ENCODE measurements at regions of chr10 and their contacts with region 1.

Region 1: DNA sequence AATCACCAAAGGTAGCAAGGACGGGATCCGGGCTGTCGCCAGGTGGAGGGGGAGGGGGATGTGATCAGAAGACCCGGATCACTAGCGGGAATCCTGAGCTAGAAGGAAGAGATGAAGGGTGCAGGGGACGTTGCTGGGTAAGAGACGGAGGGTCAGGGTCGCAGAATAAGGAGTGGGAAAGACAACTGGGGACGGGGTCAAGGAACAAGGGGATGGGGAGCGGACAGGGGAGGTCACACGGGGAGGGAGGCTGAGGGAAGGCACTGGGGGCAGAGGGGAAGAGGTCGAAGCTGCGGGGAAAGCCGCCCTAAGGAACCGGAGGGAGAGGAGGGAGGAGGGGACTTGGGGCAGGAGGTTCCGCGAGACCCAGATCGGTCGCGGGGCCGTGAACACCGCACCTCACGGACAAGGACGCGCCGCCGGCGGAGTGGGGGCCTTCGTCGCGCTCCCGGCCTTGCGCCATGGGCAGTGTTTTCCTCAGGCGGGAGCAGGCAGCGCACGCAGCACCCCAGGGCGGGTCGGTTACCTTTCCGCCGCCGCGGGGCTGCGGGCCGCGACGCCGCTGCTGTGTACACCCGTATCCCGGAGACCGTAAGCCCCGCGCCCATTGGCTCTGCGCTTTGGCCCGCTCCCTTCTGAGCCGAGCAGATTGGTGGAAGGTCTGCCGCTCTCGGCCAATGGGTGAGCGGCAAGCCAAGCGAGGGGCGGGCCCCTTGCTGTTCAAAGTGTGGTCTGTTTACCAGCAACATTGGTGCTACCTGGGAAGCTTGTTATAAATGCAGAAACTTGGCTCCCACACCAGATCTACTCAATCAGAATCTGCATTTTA is at the start of gene CFAP43:
- DNase-seq: peak; percentile 99 to 100 (median 99)
- ATAC-seq: peak; percentile 100
- H3K4me3 ChIP-seq: peak within 1 kb of the TSS; percentile 74
- H3K4me3 Mint-ChIP-seq: peak within 1 kb of the TSS; percentile 84 to 95 (median 91)
- H3K27ac ChIP-seq: peak within 1 kb of the TSS; percentile 44
- H3K27ac Mint-ChIP-seq: peak within 1 kb of the TSS; percentile 63 to 95 (median 86)
- H3K4me1 ChIP-seq: peaks cover 0 to 6% of the 10 kb centered on the region in 2 donors
- H3K4me1 Mint-ChIP-seq: peaks cover 6 to 18% (median 13%) of the 10 kb centered on the region in 7 donors
- H3K27me3 ChIP-seq: peaks cover 0 to 7% of the 10 kb centered on the region in 2 donors
- H3K27me3 Mint-ChIP-seq: peaks cover 10 to 58% (median 19%) of the 10 kb centered on the region in 5 donors
- total RNA-seq, gene CFAP43: 0.17 TPM in 1 of 5 experiments, not detected in the others

Region 2: DNA sequence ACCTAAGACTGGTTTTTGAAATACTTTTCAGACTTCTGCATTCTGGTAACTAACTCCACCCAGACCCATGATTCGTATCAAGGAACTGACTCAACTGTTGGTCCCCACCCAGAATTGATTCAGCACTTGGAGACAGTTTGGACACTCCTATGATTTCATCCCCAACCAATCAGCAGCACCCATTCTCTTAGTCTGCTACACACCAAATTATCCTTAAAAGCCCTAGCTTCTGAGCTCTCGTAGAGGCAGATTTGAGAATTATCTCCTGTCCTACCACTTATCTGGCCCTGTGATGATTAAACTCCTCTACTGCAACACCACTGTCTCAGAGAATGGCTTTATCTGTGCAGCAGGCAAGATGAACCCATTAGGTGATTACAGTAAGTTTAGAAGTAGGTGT is 15.0 kb after region 1 on chr10:
- CTCF ChIA-PET with region 1: no interaction called
- POLR2A ChIA-PET with region 1: interaction called, 3 read pairs
- intact Hi-C with region 1: loop called in 1 of 2 experiments (anchors 2 kb)
- DNase-seq: no peak
- ATAC-seq: peak; percentile 93
- H3K4me3 ChIP-seq: no peak overlapping the region
- H3K4me3 Mint-ChIP-seq: peak overlapping the region in 1 of 10 donors; percentile 26
- H3K27ac ChIP-seq: no peak overlapping the region
- H3K27ac Mint-ChIP-seq: peak overlapping the region in 1 of 9 donors; percentile 69
- H3K4me1 ChIP-seq: no peaks in the 10 kb centered on the region
- H3K4me1 Mint-ChIP-seq: peaks cover 0 to 19% (median 0%) of the 10 kb centered on the region in 7 donors
- H3K27me3 ChIP-seq: no peaks in the 10 kb centered on the region
- H3K27me3 Mint-ChIP-seq: peaks cover 0 to 28% (median 5%) of the 10 kb centered on the region in 5 donors

Region 3: DNA sequence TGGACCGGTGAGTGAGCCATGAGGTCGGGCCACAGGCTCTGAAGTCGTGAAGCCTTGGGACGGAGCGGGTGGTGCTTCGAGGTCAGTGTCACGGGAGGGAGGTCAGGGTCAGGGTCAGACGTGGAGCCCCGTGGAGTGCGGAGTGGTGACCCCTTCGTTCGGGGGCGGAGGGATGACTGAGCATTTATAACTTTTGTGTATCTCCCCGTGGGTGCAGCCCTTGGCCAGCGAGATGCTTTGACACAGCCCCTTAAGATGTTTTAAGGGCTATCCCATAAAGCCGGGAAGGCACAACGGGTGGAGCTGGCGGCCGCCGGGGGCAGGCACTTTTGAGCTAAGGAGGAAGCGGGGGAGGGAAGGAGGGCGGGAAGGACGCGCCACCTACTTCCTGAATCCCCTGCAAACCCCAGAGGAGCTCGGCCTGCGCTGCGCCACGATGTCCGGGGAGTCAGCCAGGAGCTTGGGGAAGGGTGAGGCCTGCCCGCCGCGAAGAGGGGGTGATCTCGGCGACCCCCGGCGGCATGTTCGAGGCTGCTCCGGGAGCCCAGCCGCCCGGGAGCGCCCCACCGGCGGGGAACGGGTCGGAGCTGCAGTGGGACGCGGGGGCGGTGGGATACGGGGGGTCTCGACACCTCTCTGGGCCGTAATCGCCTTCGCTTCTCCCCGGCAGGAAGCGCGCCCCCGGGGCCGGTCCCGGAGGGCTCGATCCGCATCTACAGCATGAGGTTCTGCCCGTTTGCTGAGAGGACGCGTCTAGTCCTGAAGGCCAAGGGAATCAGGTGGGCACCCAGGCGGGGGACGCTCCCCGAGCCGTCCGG is 22.7 kb after region 1 on chr10 and contains the start of gene GSTO1:
- CTCF ChIA-PET with region 1: no interaction called
- POLR2A ChIA-PET with region 1: interaction called, 6 read pairs
- intact Hi-C with region 1: loop called (anchors 1 kb)
- DNase-seq: peak; percentile 28 to 59 (median 35)
- ATAC-seq: peak; percentile 71
- H3K4me3 ChIP-seq: peak within 1 kb of the TSS; percentile 83
- H3K4me3 Mint-ChIP-seq: peak within 1 kb of the TSS; percentile 84 to 100 (median 96)
- H3K27ac ChIP-seq: peak within 1 kb of the TSS; percentile 89
- H3K27ac Mint-ChIP-seq: peak within 1 kb of the TSS; percentile 85 to 97 (median 96)
- H3K4me1 ChIP-seq: peaks cover 9 to 23% of the 10 kb centered on the region in 2 donors
- H3K4me1 Mint-ChIP-seq: peaks cover 33 to 56% (median 48%) of the 10 kb centered on the region in 7 donors
- H3K27me3 ChIP-seq: no peaks in the 10 kb centered on the region
- H3K27me3 Mint-ChIP-seq: peaks cover 0 to 19% (median 0%) of the 10 kb centered on the region in 5 donors
- total RNA-seq, gene GSTO1: 28.1 to 129 (median 49.1) TPM

Region 4: DNA sequence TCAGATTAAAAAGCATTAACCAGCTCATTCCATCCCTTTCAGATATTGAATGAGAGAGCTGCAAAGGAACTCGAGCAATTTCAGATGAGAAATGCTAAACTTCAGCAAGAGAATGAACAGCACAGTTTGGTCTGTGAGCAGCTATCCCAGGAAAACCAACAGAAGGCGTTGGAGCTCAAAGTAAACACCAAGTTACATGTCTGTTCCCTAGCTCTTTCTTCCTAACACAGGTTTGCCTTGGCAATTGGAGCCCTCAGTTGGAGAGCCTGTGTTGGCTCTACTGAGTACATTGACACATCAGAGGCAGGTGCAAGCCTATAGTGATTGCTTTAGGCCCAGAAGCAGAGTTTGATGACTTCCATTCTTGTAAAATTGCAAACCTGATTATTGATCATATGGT is 136.4 kb after region 1 on chr10:
- CTCF ChIA-PET with region 1: no interaction called
- POLR2A ChIA-PET with region 1: no interaction called
- intact Hi-C with region 1: no loop called
- DNase-seq: no peak
- ATAC-seq: no peak
- H3K4me3 ChIP-seq: no peak overlapping the region
- H3K4me3 Mint-ChIP-seq: no peak overlapping the region
- H3K27ac ChIP-seq: no peak overlapping the region
- H3K27ac Mint-ChIP-seq: no peak overlapping the region
- H3K4me1 ChIP-seq: no peaks in the 10 kb centered on the region
- H3K4me1 Mint-ChIP-seq: peaks cover 0 to under 1% (median 0%) of the 10 kb centered on the region in 7 donors
- H3K27me3 ChIP-seq: peaks cover 0 to 3% of the 10 kb centered on the region in 2 donors
- H3K27me3 Mint-ChIP-seq: peaks cover 14 to 36% (median 23%) of the 10 kb centered on the region in 5 donors

Measured in naive thymus-derived CD4-positive, alpha-beta T cell (primary cell).